ENCODE measurements at regions of chr12 and their contacts with region 1.

Region 1: GRCh38 chr12:52023182-52023975 is 16.6 kb downstream of the TAMALIN start:
- DNase-seq: peak; percentile 93
- H3K4me3 Mint-ChIP-seq: peak overlapping the region; percentile 84
- H3K27ac Mint-ChIP-seq: peak overlapping the region; percentile 99
- H3K4me1 Mint-ChIP-seq: peaks cover 46% of the 10 kb centered on the region
- H3K27me3 Mint-ChIP-seq: no peaks in the 10 kb centered on the region

Region 2: DNA sequence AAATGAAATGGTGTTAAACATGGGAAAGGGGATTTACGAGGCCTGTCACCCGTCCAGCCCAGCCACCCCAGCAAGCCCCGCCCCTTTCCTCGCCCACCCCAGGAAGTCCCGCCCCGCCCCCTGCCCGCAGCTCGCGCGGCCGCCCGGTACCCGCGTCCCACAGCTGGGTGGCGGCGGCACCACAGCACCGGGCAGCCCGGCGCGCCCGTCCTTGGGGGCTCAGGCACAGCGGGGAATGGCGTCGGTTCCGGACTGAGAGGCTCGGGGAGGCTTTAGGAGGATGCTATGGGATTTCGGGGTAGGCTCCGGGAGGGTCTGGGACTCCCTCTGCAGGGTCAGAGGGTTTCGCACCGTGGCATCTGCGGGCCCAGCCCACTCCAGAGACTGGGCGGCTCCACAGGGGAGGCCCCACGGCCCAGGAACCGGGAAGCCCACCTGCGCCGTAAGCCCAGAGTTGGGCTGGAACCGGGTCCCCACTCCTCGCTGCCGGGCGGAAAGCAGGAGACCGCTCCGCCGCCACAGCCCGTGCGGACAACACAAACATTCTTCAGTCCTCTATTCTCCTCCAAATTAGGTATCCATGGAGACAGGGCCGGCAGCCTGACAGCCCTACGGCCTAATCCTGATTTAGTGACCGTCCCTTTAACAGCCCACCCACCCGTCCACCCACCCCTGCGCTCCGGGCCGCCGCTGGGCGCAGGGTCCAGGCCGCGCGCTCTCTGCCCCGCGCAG is 176.3 kb before region 1 on chr12:
- CTCF ChIA-PET with region 1: no interaction called
- POLR2A ChIA-PET with region 1: no interaction called
- DNase-seq: peak; percentile 24
- H3K4me3 Mint-ChIP-seq: peak overlapping the region; percentile 31
- H3K27ac Mint-ChIP-seq: no peak overlapping the region
- H3K4me1 Mint-ChIP-seq: peaks cover 14% of the 10 kb centered on the region
- H3K27me3 Mint-ChIP-seq: peaks cover 57% of the 10 kb centered on the region

Region 3: DNA sequence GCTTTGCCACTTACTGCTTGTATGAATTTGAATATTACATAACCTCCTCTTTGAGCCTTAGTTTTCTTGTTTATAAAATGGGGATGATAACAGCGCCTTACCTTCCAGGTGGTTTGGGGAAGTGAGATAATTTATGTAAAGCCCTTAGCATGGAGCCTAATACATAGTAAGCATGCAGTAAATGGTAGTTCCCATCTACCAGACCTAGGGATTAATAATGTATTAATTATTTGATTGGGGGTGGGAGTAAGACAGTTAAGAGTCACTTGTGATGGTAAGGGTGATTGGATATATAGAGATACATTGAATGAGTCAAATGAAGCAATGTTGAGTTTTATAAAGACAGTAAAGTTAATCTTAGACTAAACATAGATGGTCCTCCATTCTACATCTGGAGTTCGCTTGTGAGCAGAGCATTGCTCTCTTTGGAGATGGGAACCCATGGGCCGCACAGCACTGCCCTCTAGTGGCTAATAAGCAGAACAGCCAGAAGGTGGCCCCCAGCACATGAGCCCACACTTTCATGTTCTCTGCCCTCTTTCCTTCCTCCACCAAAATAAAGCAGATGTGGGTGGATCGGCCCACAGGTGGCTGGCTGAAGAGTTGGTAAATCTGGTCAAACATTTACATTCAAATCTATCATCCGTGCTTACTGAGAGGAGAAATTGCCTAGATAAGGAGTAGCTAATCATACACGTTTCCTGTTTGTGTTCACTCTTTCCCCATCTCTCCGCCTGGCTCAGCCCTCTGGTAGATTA is 43.1 kb before region 1 on chr12:
- CTCF ChIA-PET with region 1: interaction called, 11 read pairs
- POLR2A ChIA-PET with region 1: no interaction called
- DNase-seq: peak; percentile 74
- H3K4me3 Mint-ChIP-seq: no peak overlapping the region
- H3K27ac Mint-ChIP-seq: peak overlapping the region; percentile 62
- H3K4me1 Mint-ChIP-seq: peaks cover 28% of the 10 kb centered on the region
- H3K27me3 Mint-ChIP-seq: no peaks in the 10 kb centered on the region

Region 4: GRCh38 chr12:52004042-52004648 is 19.2 kb before region 1 on chr12:
- CTCF ChIA-PET with region 1: interaction called, 168 read pairs
- POLR2A ChIA-PET with region 1: interaction called, 3 read pairs
- DNase-seq: no peak
- H3K4me3 Mint-ChIP-seq: no peak overlapping the region
- H3K27ac Mint-ChIP-seq: no peak overlapping the region
- H3K4me1 Mint-ChIP-seq: peaks cover 19% of the 10 kb centered on the region
- H3K27me3 Mint-ChIP-seq: peaks cover 28% of the 10 kb centered on the region

Region 5: DNA sequence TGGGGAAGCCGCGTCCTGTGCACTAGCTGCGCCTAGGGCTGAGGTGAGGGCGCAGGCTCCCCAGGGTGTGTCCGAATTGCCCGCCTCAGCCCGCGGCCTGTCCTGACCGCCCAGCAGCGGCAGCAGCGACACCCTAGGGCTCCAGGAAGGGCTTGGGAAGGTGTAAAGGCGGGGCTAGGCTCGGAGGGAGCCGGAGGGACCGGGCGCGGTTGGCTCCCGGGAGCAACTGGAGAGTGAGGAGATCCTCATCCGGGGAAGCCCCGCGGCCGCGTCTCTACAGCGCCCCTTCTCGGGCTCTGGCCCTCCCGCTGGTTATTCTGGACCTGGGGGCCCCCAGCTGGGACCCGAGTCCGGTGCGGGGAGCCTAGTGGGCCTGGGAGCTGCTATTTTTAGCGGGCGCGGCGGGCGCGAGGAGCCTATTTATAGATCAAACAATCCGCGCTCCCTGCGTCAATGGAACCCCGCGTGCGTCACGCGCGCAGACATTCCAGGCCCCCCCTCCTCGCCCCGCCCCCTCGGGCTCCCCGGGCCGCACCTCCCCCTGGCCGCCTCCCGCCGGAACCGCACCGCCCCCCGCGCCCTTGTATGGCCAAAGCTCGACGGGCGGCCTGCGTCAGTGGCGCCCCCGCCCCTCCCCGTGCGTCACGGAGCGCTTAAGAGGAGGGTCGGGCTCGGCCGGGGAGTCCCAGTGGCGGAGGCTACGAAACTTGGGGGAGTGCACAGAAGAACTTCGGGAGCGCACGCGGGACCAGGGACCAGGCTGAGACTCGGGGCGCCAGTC is 27.6 kb after region 1 on chr12 and contains the start of gene NR4A1:
- CTCF ChIA-PET with region 1: interaction called, 225 read pairs
- POLR2A ChIA-PET with region 1: no interaction called
- DNase-seq: peak; percentile 97
- H3K4me3 Mint-ChIP-seq: peak within 1 kb of the TSS; percentile 86
- H3K27ac Mint-ChIP-seq: peak within 1 kb of the TSS; percentile 97
- H3K4me1 Mint-ChIP-seq: peaks cover 46% of the 10 kb centered on the region
- H3K27me3 Mint-ChIP-seq: peaks cover 9% of the 10 kb centered on the region
- total RNA-seq, gene NR4A1: 2.1 to 2.7 TPM

Region 6: GRCh38 chr12:52082988-52083637 is 59.7 kb after region 1 on chr12:
- CTCF ChIA-PET with region 1: interaction called, 60 read pairs
- POLR2A ChIA-PET with region 1: no interaction called
- DNase-seq: peak; percentile 73
- H3K4me3 Mint-ChIP-seq: no peak overlapping the region
- H3K27ac Mint-ChIP-seq: no peak overlapping the region
- H3K4me1 Mint-ChIP-seq: peaks cover 14% of the 10 kb centered on the region
- H3K27me3 Mint-ChIP-seq: peaks cover 11% of the 10 kb centered on the region

Region 7: DNA sequence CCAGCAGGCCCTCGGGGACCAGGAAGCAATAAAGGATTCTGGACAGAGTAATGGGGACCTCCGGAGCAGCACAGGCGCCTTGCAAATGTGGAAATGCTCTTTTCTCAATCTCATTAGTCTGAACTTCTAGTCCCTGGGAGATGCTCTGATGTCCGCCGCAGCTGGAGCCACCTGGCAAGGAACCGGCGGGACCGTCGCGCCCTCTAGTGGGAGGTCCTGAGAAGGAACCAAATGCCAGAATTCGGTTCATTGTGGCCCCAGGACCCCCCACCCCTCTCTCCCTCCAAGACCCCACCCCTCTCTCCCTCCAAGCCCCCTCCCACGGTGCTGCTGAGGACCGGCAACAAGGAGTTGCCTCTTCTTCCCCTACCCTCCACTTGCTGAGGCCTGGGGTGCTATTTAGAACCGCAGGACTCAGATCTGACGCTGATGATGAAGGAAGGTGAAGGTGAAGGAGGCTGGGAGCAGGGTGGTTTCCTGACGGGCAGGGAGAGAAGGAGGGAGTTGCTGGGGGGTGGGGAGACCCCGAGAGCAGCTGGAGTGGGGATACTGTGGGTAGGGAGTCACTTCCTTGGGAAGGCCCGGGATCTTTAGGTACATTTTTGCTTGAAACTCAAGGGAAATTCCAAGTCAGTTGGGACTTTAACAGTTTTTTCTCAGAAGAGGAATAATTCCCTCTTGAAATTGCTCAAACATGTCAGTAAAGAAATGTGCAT is 98.6 kb after region 1 on chr12:
- CTCF ChIA-PET with region 1: interaction called, 33 read pairs
- POLR2A ChIA-PET with region 1: interaction called, 3 read pairs
- DNase-seq: peak; percentile 72
- H3K4me3 Mint-ChIP-seq: no peak overlapping the region
- H3K27ac Mint-ChIP-seq: no peak overlapping the region
- H3K4me1 Mint-ChIP-seq: peaks cover 22% of the 10 kb centered on the region
- H3K27me3 Mint-ChIP-seq: peaks cover 19% of the 10 kb centered on the region